CD8-positive, alpha-beta memory T cell (primary cell): ENCODE measurements at regions of chr10 and their contacts with region 1.

Region 1: GRCh38 chr10:43204943-43205671 is 61.8 kb downstream of the RASGEF1A start:
- DNase-seq: peak in 4 of 5 donors; percentile 32 to 67 (median 40)
- H3K4me3 ChIP-seq: no peak overlapping the region
- H3K4me3 Mint-ChIP-seq: no peak overlapping the region
- H3K27ac ChIP-seq: no peak overlapping the region
- H3K27ac Mint-ChIP-seq: peak overlapping the region in 4 of 8 donors; percentile 29 to 75 (median 60)
- H3K4me1 ChIP-seq: peaks cover 14% of the 10 kb centered on the region
- H3K4me1 Mint-ChIP-seq: peaks cover 6 to 21% (median 6%) of the 10 kb centered on the region in 3 donors
- H3K27me3 ChIP-seq: no peaks in the 10 kb centered on the region
- H3K27me3 Mint-ChIP-seq: no peaks in the 10 kb centered on the region

Region 2: GRCh38 chr10:43170491-43170890 is 34.6 kb before region 1 on chr10:
- CTCF ChIA-PET with region 1: interaction called, 10 read pairs
- POLR2A ChIA-PET with region 1: no interaction called
- DNase-seq: no peak
- H3K4me3 ChIP-seq: no peak overlapping the region
- H3K4me3 Mint-ChIP-seq: no peak overlapping the region
- H3K27ac ChIP-seq: no peak overlapping the region
- H3K27ac Mint-ChIP-seq: peak overlapping the region in 7 of 8 donors; percentile 6 to 57 (median 12)
- H3K4me1 ChIP-seq: peaks cover 6% of the 10 kb centered on the region
- H3K4me1 Mint-ChIP-seq: peaks cover 33 to 58% (median 36%) of the 10 kb centered on the region in 3 donors
- H3K27me3 ChIP-seq: no peaks in the 10 kb centered on the region
- H3K27me3 Mint-ChIP-seq: no peaks in the 10 kb centered on the region

Region 3: DNA sequence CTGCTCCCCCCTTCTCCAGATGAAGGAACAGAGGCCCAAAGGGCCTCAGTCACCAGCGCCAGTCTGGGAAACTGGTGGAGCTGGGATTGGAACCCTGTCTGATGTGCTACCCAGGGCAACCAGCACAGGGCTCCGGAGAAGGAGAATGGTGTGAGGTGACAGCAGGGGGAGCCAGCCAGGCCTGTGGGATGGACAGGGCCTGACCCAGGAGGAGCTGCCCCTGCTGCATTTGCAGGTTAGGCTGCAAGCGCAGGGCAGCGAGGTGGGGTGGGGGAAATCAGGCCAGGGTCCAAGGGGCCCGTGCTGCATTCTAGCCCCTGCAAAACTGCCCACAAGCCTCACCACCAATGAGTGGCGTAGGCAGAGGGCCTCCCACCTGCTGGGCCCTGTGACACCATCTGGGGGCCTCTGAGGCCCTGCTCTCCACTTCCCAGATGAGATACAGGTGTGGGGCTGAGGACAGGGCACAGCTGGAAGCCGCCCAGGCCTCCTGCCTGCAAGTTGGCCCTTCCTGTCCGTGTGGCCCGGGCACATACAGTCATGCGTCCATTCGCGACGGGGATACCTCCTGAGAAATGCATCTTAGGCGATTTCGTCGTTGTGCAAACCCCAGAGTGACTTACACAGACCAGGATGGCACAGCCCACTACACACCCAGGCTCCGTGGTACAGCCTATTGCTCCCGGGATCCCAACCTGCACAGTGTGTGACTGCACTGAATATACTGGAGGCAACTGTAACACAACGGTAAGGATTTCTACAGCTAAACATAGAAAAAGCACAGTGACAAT is 16.5 kb after region 1 on chr10:
- CTCF ChIA-PET with region 1: interaction called, 16 read pairs
- POLR2A ChIA-PET with region 1: no interaction called
- DNase-seq: peak in 2 of 5 donors; percentile 32 to 54
- H3K4me3 ChIP-seq: no peak overlapping the region
- H3K4me3 Mint-ChIP-seq: peak overlapping the region in 2 of 7 donors; percentile 36 to 37
- H3K27ac ChIP-seq: no peak overlapping the region
- H3K27ac Mint-ChIP-seq: peak overlapping the region in 5 of 8 donors; percentile 38 to 74 (median 55)
- H3K4me1 ChIP-seq: peaks cover 10% of the 10 kb centered on the region
- H3K4me1 Mint-ChIP-seq: peaks cover 25 to 52% (median 42%) of the 10 kb centered on the region in 3 donors
- H3K27me3 ChIP-seq: no peaks in the 10 kb centered on the region
- H3K27me3 Mint-ChIP-seq: peaks cover 0 to 3% of the 10 kb centered on the region in 2 donors

Region 4: DNA sequence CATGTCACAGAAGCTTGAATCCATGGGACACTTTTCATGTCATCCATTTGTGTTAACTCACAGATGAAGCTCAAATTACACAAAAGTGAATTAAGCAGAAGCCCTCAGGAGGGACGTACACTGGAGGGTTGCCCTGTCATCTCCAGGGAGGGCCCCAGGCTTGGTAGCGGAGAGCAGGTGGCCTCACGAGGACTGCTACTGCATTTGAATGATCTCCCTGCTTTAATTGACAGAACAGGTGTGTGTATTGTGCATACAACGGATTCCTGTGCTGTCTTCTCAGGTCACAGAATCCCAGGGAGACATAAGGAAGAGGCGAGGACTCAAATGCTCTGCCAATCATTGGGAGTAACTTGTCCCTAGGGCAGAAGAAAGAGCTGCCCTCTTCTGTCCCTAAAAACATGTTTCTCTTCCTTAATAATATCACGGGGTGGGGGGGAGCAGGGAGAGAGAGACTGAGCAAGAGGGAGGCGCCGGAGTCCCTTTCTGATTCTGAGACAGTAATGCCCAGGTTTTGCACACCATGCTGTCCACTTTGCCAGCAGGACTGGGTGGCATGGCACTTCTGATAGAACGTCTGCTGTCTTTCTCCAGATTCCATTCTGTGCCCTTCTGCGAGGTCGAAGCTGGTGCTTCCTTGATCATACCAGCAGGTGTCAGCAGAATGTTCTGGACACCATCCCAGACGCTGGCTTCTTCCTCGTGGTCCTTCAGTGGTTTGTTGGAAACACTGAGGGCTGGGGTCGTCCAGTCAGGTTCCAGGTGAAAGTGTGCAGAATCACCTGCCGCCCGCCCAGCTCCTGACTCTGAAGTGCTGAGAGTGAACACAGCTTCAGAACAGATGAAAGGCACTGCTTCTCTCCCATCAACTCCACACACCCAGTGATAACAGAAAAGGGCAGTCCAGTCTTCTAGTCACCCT is 87.9 kb after region 1 on chr10:
- CTCF ChIA-PET with region 1: interaction called, 12 read pairs
- POLR2A ChIA-PET with region 1: no interaction called
- DNase-seq: peak in 4 of 5 donors; percentile 17 to 62 (median 36)
- H3K4me3 ChIP-seq: peak overlapping the region; percentile 8
- H3K4me3 Mint-ChIP-seq: peak overlapping the region; percentile 37 to 74 (median 69)
- H3K27ac ChIP-seq: no peak overlapping the region
- H3K27ac Mint-ChIP-seq: peak overlapping the region; percentile 80 to 93 (median 90)
- H3K4me1 ChIP-seq: peaks cover 43% of the 10 kb centered on the region
- H3K4me1 Mint-ChIP-seq: peaks cover 60 to 82% (median 80%) of the 10 kb centered on the region in 3 donors
- H3K27me3 ChIP-seq: no peaks in the 10 kb centered on the region
- H3K27me3 Mint-ChIP-seq: no peaks in the 10 kb centered on the region

Region 5: DNA sequence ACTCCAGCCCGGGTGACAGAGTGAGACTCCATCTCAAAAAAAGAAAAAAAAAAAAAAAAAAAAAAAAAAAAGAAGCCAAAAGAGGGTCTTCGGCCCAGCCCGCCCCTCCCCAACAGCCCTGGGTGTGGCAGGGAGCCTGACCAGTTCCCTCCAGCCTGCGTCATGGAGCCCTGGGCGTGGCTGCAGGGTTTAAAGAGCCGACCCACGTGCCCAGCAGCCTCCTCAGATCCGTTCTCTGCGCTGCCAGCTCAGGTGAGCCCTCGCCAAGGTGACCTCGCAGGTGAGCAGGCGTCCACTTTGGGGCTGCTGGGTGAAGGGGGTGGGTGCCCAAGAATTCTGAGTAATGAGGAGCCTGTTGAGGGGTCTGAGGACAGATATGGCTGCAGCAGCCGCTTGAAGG is 166.3 kb after region 1 on chr10 and contains the start of gene FXYD4:
- CTCF ChIA-PET with region 1: no interaction called
- POLR2A ChIA-PET with region 1: no interaction called
- DNase-seq: no peak
- H3K4me3 ChIP-seq: no peak within 1 kb of the TSS
- H3K4me3 Mint-ChIP-seq: no peak within 1 kb of the TSS
- H3K27ac ChIP-seq: no peak within 1 kb of the TSS
- H3K27ac Mint-ChIP-seq: no peak within 1 kb of the TSS
- H3K4me1 ChIP-seq: no peaks in the 10 kb centered on the region
- H3K4me1 Mint-ChIP-seq: peaks cover 10 to 13% (median 11%) of the 10 kb centered on the region in 3 donors
- H3K27me3 ChIP-seq: no peaks in the 10 kb centered on the region
- H3K27me3 Mint-ChIP-seq: peaks cover 0 to 3% of the 10 kb centered on the region in 2 donors
- total RNA-seq, gene FXYD4: not detected